Activated CD8-positive, alpha-beta memory T cell treated with anti-CD3 and anti-CD28 coated beads, Interleukin-2, amount 10 ng/mL, durations not matched to agents 7 days and 5 days (primary cell): ENCODE measurements at regions of chr19 and their contacts with region 1.

Region 1: DNA sequence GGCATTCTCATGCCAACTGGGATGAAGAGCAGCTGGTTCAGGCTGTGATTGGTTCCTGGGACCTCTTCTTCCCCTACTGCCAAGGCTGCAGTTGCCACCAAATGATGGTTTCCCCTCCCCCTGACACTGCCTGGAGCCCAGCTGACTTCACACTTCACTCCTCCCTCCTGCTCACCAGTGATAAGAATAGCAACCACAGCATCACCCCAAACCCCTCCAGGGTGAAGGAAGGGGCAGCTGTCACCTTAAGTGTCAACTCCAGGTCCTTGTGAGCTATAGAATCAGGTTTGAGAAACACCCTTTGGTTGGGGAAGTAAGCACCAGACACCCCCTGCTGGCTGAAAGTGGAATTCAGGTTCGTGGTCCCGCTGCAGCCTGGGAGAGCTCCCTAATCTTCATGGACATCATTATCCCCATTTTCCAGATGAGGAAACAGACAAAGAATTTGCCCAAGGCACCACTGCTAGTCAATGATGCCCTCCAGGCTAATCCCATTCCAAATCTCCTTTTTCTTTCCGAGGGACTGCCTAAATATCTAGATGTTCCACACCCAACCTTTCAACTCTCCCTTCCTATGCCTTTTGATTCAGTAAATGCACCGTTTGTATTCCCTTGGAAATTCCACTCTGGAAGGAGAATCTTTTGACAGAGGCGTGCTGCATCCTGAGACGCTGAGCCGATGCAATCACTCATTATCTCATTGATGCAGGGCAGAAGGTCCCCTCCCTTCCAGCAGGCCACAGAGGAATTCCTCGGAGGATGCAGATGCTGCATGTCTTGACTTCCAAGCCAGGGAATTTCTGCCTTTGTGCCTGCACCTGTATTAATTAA is 50.6 kb upstream of the UQCRFS1 start:
- DNase-seq: peak; percentile 65
- ATAC-seq: peak; percentile 39
- H3K4me3 Mint-ChIP-seq: no peak overlapping the region
- H3K27ac Mint-ChIP-seq: no peak overlapping the region
- H3K4me1 Mint-ChIP-seq: no peaks in the 10 kb centered on the region
- H3K27me3 Mint-ChIP-seq: peaks cover 2% of the 10 kb centered on the region

Region 2: GRCh38 chr19:28737021-28737895 is 526.3 kb before region 1 on chr19:
- CTCF ChIA-PET with region 1: interaction called, 13 read pairs
- DNase-seq: no peak
- ATAC-seq: peak; percentile 53
- H3K4me3 Mint-ChIP-seq: no peak overlapping the region
- H3K27ac Mint-ChIP-seq: peak overlapping the region; percentile 60
- H3K4me1 Mint-ChIP-seq: peaks cover 3% of the 10 kb centered on the region
- H3K27me3 Mint-ChIP-seq: no peaks in the 10 kb centered on the region

Region 3: GRCh38 chr19:28940751-28941500 is 322.6 kb before region 1 on chr19:
- CTCF ChIA-PET with region 1: no interaction called
- DNase-seq: no peak
- ATAC-seq: no peak
- H3K4me3 Mint-ChIP-seq: no peak overlapping the region
- H3K27ac Mint-ChIP-seq: no peak overlapping the region
- H3K4me1 Mint-ChIP-seq: no peaks in the 10 kb centered on the region
- H3K27me3 Mint-ChIP-seq: no peaks in the 10 kb centered on the region

Region 4: DNA sequence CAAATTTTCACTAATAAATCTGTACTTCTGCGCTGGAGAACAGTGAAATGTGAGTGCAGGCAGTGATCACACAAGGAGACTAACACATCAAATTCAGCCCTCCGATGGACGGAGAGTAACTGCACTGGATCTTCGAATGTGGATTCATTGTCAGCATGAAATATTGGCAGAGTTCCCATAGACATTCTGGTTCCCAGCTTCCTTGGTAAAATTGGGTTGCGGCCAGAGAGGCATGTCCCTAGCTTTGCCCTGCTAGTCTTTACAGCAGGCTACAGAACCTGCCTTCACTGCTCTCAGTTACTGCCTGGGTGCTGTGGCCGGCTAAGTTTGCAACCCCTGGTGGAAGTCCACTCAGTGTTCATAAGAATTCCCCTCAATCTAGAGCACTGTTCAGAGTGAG is 18.3 kb before region 1 on chr19:
- CTCF ChIA-PET with region 1: no interaction called
- DNase-seq: no peak
- ATAC-seq: no peak
- H3K4me3 Mint-ChIP-seq: no peak overlapping the region
- H3K27ac Mint-ChIP-seq: no peak overlapping the region
- H3K4me1 Mint-ChIP-seq: no peaks in the 10 kb centered on the region
- H3K27me3 Mint-ChIP-seq: peaks cover 11% of the 10 kb centered on the region

Region 5: DNA sequence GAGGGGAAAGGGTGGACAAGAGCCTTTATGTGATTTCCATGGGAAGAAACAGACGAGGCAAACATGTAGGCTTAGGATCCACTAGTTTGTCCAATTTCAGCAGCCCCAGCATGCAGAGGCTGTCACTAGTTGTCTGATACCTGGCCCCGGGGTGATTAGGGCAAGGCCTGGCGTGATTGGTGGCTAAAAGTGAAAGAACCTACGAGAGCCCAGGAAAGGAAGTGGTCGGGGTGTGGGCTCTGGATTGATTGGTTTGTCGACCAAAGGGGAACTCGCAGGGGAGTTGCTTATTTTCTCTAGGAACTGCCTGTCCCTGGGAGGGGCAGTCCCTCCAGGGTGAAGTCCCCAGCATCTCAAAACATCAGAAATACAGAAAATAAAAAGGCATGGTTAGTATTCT is 13.6 kb after region 1 on chr19:
- CTCF ChIA-PET with region 1: interaction called, 16 read pairs
- DNase-seq: peak; percentile 88
- ATAC-seq: peak; percentile 100
- H3K4me3 Mint-ChIP-seq: peak overlapping the region; percentile 23
- H3K27ac Mint-ChIP-seq: peak overlapping the region; percentile 68
- H3K4me1 Mint-ChIP-seq: peaks cover 13% of the 10 kb centered on the region
- H3K27me3 Mint-ChIP-seq: peaks cover 11% of the 10 kb centered on the region

Region 6: DNA sequence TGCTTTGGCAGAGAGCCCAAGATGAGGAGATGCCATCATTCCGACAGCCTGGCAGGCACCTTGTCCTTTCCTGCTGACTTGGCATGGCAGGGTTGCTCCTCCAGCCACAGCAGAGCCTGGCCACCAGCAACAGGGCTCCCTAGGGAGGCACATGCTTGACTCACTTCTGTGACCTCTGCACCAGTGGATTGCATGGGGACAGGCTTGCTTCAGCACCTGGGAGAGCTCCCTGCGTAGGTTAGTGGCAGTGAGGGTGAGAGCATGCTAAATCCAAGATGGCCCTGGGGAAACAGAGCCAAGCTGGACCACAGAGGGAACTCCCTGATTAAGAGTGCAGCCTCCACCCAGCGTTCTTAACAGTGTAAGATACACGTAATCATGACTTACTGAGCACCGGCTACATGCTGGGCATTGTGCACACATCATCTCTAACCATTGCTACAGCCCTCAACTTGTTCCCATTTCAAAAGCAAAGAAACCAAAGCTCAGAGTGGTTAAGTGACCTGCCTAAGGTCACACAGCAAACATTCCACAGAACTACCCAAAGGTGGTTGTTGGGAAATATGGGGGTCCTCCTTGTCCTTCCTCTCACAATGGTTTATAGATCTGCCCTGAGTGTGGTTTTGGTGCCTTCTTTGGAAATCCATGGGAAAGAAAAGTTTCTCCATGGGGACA is 66.1 kb after region 1 on chr19:
- CTCF ChIA-PET with region 1: no interaction called
- DNase-seq: no peak
- ATAC-seq: no peak
- H3K4me3 Mint-ChIP-seq: no peak overlapping the region
- H3K27ac Mint-ChIP-seq: no peak overlapping the region
- H3K4me1 Mint-ChIP-seq: no peaks in the 10 kb centered on the region
- H3K27me3 Mint-ChIP-seq: no peaks in the 10 kb centered on the region

Region 7: DNA sequence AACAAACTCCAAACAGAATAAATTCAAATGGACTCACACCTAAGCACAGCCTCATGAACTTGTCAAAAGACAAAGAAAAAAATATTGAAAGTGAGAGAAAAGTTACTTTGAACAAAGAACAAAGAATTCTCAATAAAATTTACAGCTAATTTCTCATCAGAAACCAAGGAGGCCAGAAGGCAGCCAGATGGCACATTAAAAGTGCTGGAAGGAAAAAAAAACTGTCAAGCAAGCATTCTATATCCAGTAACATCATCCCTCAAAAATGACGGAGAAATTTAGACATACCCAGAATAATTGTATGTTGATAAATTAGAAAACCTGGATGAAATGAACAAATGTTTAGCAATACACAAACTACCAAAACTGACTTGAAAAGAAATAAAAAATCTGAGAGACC is 79.2 kb after region 1 on chr19:
- CTCF ChIA-PET with region 1: no interaction called
- DNase-seq: no peak
- ATAC-seq: no peak
- H3K4me3 Mint-ChIP-seq: no peak overlapping the region
- H3K27ac Mint-ChIP-seq: no peak overlapping the region
- H3K4me1 Mint-ChIP-seq: no peaks in the 10 kb centered on the region
- H3K27me3 Mint-ChIP-seq: peaks cover 5% of the 10 kb centered on the region